ENCODE measurements at regions of chr16 and their contacts with region 1.

Region 1: DNA sequence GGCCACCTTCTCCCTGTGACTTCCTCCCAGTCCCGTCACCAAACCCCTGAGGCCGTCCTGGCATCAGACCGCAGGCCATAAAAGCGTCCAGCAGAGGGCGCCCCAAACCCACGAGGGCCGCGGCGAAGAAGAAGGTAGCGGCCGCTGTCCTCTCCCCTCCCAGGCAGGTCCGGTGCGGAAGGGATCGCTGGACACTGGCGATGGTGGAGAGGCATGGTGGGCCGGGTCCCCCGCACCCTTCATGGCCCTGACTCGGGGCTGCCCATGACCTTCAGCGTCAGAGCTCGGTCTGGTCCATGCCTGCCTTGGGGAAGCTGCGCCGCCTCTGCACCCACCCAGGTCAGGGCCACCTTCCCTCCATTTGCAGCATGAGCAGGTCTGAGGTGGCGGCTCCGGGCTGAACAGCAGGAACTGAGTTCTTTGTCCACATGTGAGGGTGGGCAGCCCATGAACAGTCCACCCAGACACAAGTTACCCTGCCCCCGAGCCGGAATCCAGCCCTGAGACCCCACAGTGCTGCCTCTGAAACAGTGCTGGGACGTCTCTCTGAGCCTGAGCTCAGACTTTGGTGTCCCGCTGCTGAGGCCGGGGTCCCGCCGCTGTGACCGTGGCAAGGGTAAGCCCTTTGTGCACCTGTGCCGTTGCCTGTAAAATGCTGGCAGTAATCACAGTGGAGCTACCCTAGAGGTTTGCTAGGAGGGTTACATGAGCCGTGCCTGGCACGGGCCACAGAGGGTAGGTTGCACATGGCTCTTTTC is 40.8 kb upstream of the CMIP start:
- DNase-seq: peak; percentile 95

Region 2: GRCh38 chr16:81366316-81366932 is 37.4 kb before region 1 on chr16:
- intact Hi-C with region 1: loop called (anchors 2 kb)
- DNase-seq: no peak

Region 3: DNA sequence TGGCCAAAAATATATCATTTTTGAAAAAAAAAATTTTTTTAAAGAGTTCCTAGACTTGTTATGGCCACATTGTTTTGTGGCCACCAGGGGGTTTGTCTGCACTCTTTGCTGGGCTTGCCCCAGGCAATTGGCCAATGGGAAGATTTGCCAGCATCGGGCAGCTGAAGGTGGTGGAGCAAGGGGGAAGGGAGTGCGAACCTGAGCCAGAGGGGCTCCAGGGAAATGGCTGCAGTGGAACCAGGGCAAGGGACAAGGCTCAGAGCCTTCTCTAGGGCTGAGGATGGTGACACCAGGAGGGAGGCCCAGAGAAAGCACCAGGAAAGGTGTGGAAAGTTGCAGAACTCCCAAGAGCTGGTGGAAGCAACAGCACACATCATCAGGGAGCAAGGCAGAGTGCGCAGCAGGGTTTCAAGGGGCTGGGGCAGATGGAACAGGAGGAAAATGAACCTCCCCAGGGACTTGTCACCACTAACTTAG is 25.3 kb after region 1 on chr16:
- intact Hi-C with region 1: no loop called
- DNase-seq: no peak

Region 4: DNA sequence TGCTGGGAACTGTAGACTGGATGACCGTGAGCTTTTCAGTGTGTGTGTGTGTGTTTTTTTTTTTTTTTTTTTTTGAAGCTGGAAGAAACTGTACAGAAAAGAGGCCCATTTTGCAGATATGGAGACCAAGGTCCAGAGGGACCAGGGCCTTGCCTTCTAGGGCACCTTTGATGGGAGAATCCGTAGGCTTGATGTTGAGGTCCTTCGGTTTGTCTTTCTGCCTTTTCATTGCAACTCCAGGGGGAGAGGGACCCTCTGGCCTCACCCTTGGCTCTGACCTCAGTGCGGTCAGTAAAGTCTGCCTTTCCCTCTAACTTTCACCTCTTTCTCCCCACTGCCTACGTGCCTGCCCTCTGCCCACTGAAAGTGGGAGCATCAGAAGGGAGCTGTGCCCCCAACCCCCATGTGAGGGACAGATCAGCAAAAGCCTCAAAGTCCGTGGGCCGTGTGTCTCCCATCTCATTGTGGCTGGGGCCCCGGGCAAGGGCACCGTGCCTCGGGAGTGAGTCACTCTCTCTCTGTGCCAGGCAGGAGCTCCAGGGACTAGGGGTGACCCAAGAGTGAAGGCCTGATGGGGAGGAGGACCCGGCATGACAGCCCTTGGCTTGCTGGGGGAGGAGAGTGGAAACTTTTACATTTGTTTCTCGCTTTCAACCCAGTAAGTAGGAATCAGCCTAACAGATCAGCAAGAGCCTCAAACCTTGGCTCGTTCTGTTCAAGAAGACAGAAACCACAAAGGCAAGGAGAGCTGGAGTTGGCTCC is 164.4 kb after region 1 on chr16:
- intact Hi-C with region 1: no loop called
- DNase-seq: no peak

Region 5: GRCh38 chr16:81623363-81624102 is 219.7 kb after region 1 on chr16:
- intact Hi-C with region 1: loop called (anchors 5 kb)
- DNase-seq: no peak

Region 6: GRCh38 chr16:81696961-81697615 is 293.3 kb after region 1 on chr16:
- intact Hi-C with region 1: loop called (anchors 10 kb)
- DNase-seq: no peak

Region 7: GRCh38 chr16:81723098-81723723 is 319.4 kb after region 1 on chr16:
- intact Hi-C with region 1: loop called (anchors 1 kb)
- DNase-seq: no peak

Measured in cardiac septum (tissue), 1 donor.